Gastrocnemius medialis (tissue), 4 donors: ENCODE measurements at regions of chr10 and their contacts with region 1.

Region 1: GRCh38 chr10:12720217-12720981 is 281.1 kb downstream of the CCDC3 start:
- DNase-seq: peak; percentile 73 to 85
- ATAC-seq: peak; percentile 96 to 97
- H3K4me3 ChIP-seq: no peak overlapping the region
- H3K27ac ChIP-seq: peak overlapping the region; percentile 77 to 85 (median 80)
- H3K4me1 ChIP-seq: peaks cover 5 to 19% of the 10 kb centered on the region in 2 donors
- H3K27me3 ChIP-seq: no peaks in the 10 kb centered on the region
- CTCF ChIP-seq: no peak
- POLR2A ChIP-seq: no peak

Region 2: GRCh38 chr10:12431151-12432101 is 289.0 kb before region 1 on chr10:
- in situ Hi-C with region 1: no loop called
- intact Hi-C with region 1: no loop called
- DNase-seq: peak in 1 of 2 donors; percentile 31
- ATAC-seq: peak; percentile 54 to 66
- H3K4me3 ChIP-seq: no peak overlapping the region
- H3K27ac ChIP-seq: no peak overlapping the region
- H3K4me1 ChIP-seq: no peaks in the 10 kb centered on the region
- H3K27me3 ChIP-seq: no peaks in the 10 kb centered on the region
- CTCF ChIP-seq: no peak
- POLR2A ChIP-seq: no peak

Region 3: DNA sequence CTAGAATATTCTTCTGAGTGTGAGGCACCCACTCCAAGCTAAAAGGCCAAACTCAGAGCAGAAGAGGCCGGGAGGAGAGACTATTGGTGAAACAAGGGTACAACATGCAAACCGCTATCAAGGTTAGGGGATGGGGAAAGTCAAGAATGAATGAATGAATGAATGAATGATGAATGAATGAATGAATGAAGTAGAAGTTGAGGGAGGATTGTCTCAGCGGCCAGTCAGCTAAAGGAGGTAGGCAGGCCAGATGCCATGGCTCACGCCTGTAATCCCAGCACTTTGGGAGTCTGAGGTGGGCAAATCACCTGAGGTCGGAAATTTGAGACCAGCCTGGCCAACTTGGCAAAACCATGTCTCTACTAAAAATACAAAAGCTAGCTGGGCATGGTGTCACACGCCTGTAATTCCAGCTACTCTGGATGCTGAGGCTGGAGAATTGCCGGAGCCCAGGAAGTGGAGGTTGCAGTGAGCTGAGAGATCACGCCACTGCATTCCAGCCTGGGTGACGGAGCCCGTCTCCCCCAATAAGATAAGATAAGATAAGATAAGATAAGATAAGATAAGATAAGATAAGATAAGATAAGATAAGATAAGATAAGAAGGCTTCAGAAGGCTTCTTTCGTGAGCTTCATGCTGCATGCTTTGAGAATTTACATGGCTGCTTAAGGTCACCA is 30.3 kb after region 1 on chr10:
- in situ Hi-C with region 1: no loop called
- intact Hi-C with region 1: loop called (anchors 2 kb)
- DNase-seq: peak; percentile 29 to 64
- ATAC-seq: peak; percentile 49 to 55
- H3K4me3 ChIP-seq: no peak overlapping the region
- H3K27ac ChIP-seq: peak overlapping the region; percentile 73 to 88 (median 76)
- H3K4me1 ChIP-seq: peaks cover 5 to 11% of the 10 kb centered on the region in 2 donors
- H3K27me3 ChIP-seq: no peaks in the 10 kb centered on the region
- CTCF ChIP-seq: peak in 1 of 5 experiments; percentile 7
- POLR2A ChIP-seq: no peak

Region 4: DNA sequence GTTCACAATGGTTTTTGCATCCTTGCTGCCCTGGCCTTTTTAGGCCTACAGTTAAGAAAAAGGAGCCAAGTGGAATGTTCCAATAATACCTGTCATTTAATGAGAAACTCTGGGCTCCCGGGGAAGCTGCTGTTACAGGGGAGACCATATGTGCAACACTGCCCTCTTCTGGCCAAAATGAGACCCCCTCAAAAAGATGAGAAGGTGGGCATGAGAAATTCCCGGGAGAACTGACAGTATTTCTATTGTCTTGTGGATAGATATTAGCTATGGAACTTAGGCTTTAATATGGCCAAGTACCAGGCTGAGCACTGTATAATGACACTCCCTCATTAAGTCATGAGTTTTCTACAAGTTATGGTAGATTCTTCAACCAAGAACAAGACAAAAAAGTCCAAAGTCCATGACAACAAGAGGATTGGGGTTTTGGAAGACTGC is 181.8 kb after region 1 on chr10:
- in situ Hi-C with region 1: loop called in 2 of 4 experiments (anchors 10 kb)
- intact Hi-C with region 1: loop called (anchors 1 kb)
- DNase-seq: no peak
- ATAC-seq: no peak
- H3K4me3 ChIP-seq: no peak overlapping the region
- H3K27ac ChIP-seq: no peak overlapping the region
- H3K4me1 ChIP-seq: no peaks in the 10 kb centered on the region
- H3K27me3 ChIP-seq: no peaks in the 10 kb centered on the region
- CTCF ChIP-seq: peak; percentile 20 to 75 (median 63)
- POLR2A ChIP-seq: no peak

Region 5: GRCh38 chr10:13074561-13075451 is 354.4 kb after region 1 on chr10:
- in situ Hi-C with region 1: loop called in 3 of 4 experiments (anchors 10 kb)
- intact Hi-C with region 1: loop called (anchors 1 kb)
- DNase-seq: peak in 1 of 2 donors; percentile 33
- ATAC-seq: peak in 1 of 2 donors; percentile 56
- H3K4me3 ChIP-seq: no peak overlapping the region
- H3K27ac ChIP-seq: no peak overlapping the region
- H3K4me1 ChIP-seq: no peaks in the 10 kb centered on the region
- H3K27me3 ChIP-seq: peaks cover 0 to 4% (median 0%) of the 10 kb centered on the region in 3 donors
- CTCF ChIP-seq: peak; percentile 50 to 85 (median 66)
- POLR2A ChIP-seq: no peak

Region 6: GRCh38 chr10:13087986-13088618 is 367.7 kb after region 1 on chr10:
- in situ Hi-C with region 1: loop called in 2 of 4 experiments (anchors 10 kb)
- intact Hi-C with region 1: no loop called
- DNase-seq: no peak
- ATAC-seq: peak; percentile 73 to 87
- H3K4me3 ChIP-seq: no peak overlapping the region
- H3K27ac ChIP-seq: peak overlapping the region in 3 of 4 donors; percentile 41 to 50 (median 47)
- H3K4me1 ChIP-seq: peaks cover 0 to 4% of the 10 kb centered on the region in 2 donors
- H3K27me3 ChIP-seq: no peaks in the 10 kb centered on the region
- CTCF ChIP-seq: no peak
- POLR2A ChIP-seq: no peak